RWPE1 (cell line): ENCODE measurements at regions of chr6 and their contacts with region 1.

Region 1: DNA sequence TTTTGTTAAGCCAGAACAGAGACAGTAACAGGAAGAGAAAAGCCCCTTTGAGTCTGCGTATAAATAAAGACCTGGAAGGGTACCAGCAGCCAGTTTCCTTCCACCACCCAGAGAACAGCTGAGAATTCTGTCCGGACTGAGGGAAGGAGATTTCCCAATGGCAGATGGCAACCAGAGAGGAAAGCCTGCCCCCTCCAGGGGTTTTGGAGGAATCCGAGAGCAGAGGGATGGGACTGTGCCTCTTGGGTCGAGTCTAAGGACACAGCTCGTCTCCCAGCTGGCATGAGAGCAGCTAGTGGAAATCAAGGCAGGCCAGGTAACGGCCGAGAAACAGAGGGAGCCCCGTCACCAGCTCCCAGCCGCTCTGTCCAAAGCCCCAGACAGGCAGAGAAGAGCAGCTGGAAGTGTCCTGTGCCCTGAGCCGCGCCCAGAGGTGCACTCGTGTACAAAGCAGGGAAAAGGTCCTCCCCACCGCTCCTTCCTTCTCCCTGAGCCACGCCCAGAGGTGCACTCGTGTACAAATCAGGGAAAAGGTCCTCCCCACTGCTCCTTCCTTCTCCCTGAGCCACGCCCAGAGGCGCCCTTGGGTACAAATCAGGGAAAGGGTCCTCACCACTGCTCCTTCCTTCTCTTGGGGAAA is 134.0 kb upstream of the SNX9 start:
- DNase-seq: no peak
- H3K27ac ChIP-seq: no peak overlapping the region
- CTCF ChIP-seq: no peak

Region 2: DNA sequence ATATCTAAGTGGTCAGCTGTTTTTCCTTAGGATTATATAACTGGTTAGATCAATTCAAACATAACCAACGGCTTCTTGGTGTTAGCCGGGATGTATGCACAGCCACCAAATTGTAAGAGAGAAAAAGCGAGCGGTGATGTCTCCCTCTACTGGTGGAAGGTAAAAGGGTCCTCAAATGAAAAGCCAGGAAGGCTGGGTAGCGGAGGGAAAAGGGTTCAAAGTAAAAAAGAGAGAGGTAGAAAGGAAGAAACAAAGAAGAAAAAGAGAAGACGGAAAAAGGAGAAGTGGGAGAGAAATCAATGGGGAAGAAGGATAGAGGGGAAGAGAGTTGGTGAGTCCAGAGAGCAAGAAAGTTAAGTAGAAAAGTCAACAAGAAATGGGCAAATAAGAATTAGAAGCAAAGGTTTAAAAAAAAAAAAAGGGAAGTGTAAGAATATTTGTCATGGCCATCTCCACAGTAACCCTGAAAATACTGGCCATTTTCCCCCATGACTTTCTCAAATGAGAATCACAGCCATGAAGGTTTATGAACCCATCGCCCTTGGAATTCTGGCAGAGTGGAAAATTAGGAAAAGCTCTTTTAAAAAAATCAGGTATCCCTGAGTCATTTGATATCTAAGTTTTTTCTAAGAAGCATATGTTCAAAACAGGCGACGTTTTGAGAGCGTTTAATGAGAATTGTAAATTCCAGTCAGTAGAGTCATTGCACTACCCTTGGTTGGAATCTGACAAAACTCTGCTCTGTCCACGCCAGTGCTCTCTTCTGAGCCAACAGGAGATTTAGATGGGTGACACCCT is 21.7 kb before region 1 on chr6:
- CTCF ChIA-PET with region 1: interaction called, 12 read pairs
- POLR2A ChIA-PET with region 1: no interaction called
- DNase-seq: peak; percentile 77
- H3K27ac ChIP-seq: no peak overlapping the region
- CTCF ChIP-seq: peak; percentile 91

Region 3: DNA sequence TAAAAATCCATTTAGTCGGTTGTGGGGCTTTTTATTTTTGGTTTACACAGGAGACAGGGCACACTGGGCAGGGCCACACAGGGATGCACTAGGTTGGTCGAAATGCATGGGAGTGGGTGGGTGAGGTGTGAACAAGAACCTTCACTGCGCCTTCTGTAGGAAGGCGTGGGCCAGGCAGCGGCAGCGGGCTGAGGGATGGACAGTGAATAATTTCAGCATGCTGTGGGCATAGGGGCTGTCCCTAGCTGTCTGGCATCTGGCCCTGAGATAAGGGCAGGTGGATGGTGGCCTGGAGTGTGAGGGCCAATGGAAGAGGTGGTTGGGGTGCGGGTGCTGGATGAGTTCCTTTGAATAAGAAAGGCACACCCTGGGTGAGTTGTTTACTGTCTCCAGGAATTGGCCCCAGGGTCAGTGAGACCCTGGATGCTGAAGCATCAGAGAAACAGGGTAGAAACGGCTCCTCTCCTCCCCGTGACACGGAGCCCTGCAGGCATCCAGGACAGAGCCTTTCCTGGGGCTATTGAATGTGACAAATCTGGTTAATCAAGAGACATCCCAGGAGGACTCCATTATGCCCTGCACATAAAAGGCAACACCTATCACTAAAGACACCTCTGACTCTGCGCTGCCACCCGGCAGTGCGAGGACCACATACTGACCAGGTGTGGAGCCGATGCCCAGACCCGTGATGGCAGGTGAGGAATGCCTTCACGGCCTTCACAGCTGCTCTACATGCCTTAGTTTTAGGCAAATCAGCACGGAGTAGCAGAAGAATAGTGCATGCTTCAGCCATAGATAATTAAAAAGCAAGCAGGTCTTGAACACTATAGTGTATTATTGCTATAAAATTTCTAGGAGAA is 10.9 kb after region 1 on chr6:
- CTCF ChIA-PET with region 1: no interaction called
- POLR2A ChIA-PET with region 1: no interaction called
- DNase-seq: no peak
- H3K27ac ChIP-seq: no peak overlapping the region
- CTCF ChIP-seq: no peak

Region 4: GRCh38 chr6:157726892-157727628 is 38.0 kb after region 1 on chr6:
- CTCF ChIA-PET with region 1: no interaction called
- POLR2A ChIA-PET with region 1: no interaction called
- DNase-seq: no peak
- H3K27ac ChIP-seq: no peak overlapping the region
- CTCF ChIP-seq: no peak

Region 5: DNA sequence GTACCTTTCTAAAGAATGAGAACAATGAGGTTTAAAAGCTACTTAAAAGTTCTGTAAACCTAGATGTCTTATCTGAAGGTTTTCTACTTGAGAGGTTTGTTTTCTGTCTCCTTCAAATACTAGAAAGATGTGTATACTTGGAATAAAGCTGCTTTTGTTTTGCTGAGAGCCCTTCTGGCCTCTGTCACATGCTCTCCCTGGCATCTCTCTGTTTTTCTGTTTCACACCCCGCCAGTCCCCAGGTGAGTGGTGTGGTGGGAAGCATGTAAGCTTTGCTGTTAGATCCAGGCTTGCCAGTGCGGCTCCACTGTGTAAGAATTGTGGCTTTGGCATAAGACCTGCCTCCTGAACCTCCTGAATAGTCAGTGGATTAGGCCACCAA is 190.8 kb after region 1 on chr6:
- CTCF ChIA-PET with region 1: no interaction called
- POLR2A ChIA-PET with region 1: no interaction called
- DNase-seq: no peak
- H3K27ac ChIP-seq: no peak overlapping the region
- CTCF ChIP-seq: no peak